Prostate gland (tissue), 2 donors: ENCODE measurements at regions of chrX and their contacts with region 1.

Region 1: GRCh38 chrX:104098151-104098808 is 14.0 kb upstream of the ZCCHC18 start:
- DNase-seq: peak; percentile 27
- H3K4me3 ChIP-seq: no peak overlapping the region
- H3K27ac ChIP-seq: no peak overlapping the region
- H3K4me1 ChIP-seq: no peaks in the 10 kb centered on the region
- H3K27me3 ChIP-seq: no peaks in the 10 kb centered on the region
- CTCF ChIP-seq: peak in 3 of 4 experiments; percentile 52 to 60 (median 54)
- POLR2A ChIP-seq: no peak

Region 2: GRCh38 chrX:104136241-104137019 is 38.1 kb after region 1 on chrX:
- intact Hi-C with region 1: loop called (anchors 2 kb)
- DNase-seq: peak; percentile 70
- H3K4me3 ChIP-seq: peak overlapping the region in 1 of 2 donors; percentile 22
- H3K27ac ChIP-seq: no peak overlapping the region
- H3K4me1 ChIP-seq: no peaks in the 10 kb centered on the region
- H3K27me3 ChIP-seq: no peaks in the 10 kb centered on the region
- CTCF ChIP-seq: peak; percentile 28 to 64 (median 58)
- POLR2A ChIP-seq: no peak